Common myeloid progenitor, CD34-positive (primary cell): ENCODE measurements at regions of chr6 and their contacts with region 1.

Region 1: GRCh38 chr6:75208298-75209183 is 2.7 kb upstream of the COL12A1 start:
- DNase-seq: peak; percentile 79 to 88 (median 86)
- H3K4me3 ChIP-seq: peak overlapping the region in 6 of 7 experiments; percentile 24 to 60 (median 26)
- H3K27ac ChIP-seq: no peak overlapping the region
- H3K4me1 ChIP-seq: peaks cover 3 to 60% (median 45%) of the 10 kb centered on the region in 4 experiments
- H3K27me3 ChIP-seq: peaks cover 4 to 53% (median 46%) of the 10 kb centered on the region in 5 experiments

Region 2: DNA sequence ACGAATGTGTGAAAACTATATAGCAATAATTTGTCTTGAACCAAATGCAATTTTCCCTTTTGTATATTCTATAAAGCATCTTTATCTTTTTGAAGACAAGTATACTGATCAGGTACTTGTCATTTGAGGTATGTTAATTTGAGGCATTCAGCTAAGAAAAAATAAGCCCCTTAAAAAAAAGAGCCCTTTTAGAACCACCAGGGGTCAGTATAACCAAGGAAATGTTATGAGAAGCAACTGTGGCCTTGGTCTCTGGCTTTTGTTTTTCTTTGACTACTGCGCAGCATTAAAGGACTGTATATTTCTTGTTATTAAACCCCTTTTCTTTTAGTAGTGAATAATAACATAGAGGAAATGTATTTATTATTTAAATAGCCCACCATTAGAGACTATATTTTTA is 1469.4 kb before region 1 on chr6:
- CTCF ChIA-PET with region 1: interaction called, 11 read pairs
- POLR2A ChIA-PET with region 1: no interaction called
- DNase-seq: peak; percentile 71 to 86 (median 77)
- H3K4me3 ChIP-seq: no peak overlapping the region
- H3K27ac ChIP-seq: no peak overlapping the region
- H3K4me1 ChIP-seq: peaks cover 0 to 5% (median 0%) of the 10 kb centered on the region in 4 experiments
- H3K27me3 ChIP-seq: no peaks in the 10 kb centered on the region

Region 3: DNA sequence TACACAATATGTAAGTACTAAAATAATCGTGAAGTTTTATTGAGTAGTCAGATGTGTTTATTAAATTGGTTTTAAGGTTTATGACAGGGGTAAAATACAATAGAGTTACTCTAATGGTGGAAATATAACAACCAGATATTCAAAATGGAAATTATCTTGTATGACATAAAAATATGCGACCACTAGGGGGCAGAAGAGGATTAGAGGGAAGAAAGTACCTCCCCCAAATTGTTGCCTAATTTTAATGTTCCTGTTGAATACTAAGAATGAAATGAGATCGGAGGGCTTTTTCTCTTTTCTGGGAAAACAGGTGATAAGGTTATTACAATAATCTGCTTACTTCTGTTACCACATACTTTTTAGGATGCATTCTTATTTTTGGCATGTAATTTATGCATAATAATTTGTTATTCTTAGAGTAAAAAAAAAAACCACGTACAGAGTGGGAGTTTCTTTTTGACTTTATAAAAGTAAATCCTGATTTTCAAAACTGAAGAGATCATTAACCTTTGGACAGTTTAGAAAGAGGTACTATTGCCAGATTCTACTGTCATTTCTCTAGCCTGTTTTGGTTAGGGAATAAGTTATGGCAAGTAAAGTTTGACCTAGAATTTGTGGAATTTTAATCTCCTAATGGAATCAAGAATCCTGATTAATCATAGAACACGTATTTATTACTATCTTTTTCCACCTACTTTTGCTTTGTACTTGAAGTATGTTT is 1353.4 kb before region 1 on chr6:
- CTCF ChIA-PET with region 1: interaction called, 23 read pairs
- POLR2A ChIA-PET with region 1: no interaction called
- DNase-seq: peak; percentile 67 to 84 (median 80)
- H3K4me3 ChIP-seq: no peak overlapping the region
- H3K27ac ChIP-seq: no peak overlapping the region
- H3K4me1 ChIP-seq: no peaks in the 10 kb centered on the region
- H3K27me3 ChIP-seq: no peaks in the 10 kb centered on the region

Region 4: GRCh38 chr6:73969971-73970970 is 1238.3 kb before region 1 on chr6:
- CTCF ChIA-PET with region 1: interaction called, 16 read pairs
- POLR2A ChIA-PET with region 1: no interaction called
- DNase-seq: peak; percentile 16 to 53 (median 49)
- H3K4me3 ChIP-seq: no peak overlapping the region
- H3K27ac ChIP-seq: no peak overlapping the region
- H3K4me1 ChIP-seq: peaks cover 0 to 4% (median 0%) of the 10 kb centered on the region in 4 experiments
- H3K27me3 ChIP-seq: no peaks in the 10 kb centered on the region

Region 5: GRCh38 chr6:74091136-74091793 is 1117.3 kb before region 1 on chr6:
- CTCF ChIA-PET with region 1: interaction called, 63 read pairs
- POLR2A ChIA-PET with region 1: no interaction called
- DNase-seq: peak; percentile 20 to 54 (median 41)
- H3K4me3 ChIP-seq: no peak overlapping the region
- H3K27ac ChIP-seq: no peak overlapping the region
- H3K4me1 ChIP-seq: no peaks in the 10 kb centered on the region
- H3K27me3 ChIP-seq: peaks cover 0 to 2% (median 0%) of the 10 kb centered on the region in 5 experiments

Region 6: GRCh38 chr6:74899416-74899815 is 309.1 kb before region 1 on chr6:
- CTCF ChIA-PET with region 1: no interaction called
- POLR2A ChIA-PET with region 1: no interaction called
- DNase-seq: no peak
- H3K4me3 ChIP-seq: no peak overlapping the region
- H3K27ac ChIP-seq: no peak overlapping the region
- H3K4me1 ChIP-seq: no peaks in the 10 kb centered on the region
- H3K27me3 ChIP-seq: no peaks in the 10 kb centered on the region

Region 7: DNA sequence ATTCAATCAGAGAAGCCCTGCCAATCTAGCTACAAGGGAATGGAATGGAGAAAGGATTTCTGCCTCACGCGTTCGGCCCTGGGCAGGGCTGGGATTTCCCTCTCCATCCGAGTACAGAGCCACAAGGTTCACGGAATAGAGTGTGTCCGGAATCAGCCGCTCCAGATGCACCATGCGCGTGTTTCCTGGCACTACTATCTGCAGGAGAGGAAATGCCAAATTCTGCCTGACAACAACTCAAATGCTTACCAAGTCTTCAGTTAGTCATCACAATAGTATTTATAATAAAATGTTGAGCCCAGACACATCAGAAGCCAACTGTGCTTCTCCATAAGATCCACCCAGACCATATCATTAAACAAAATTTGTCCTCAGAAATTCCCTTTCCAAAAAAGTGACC is 77.8 kb before region 1 on chr6:
- CTCF ChIA-PET with region 1: no interaction called
- POLR2A ChIA-PET with region 1: no interaction called
- DNase-seq: no peak
- H3K4me3 ChIP-seq: no peak overlapping the region
- H3K27ac ChIP-seq: no peak overlapping the region
- H3K4me1 ChIP-seq: no peaks in the 10 kb centered on the region
- H3K27me3 ChIP-seq: no peaks in the 10 kb centered on the region

Region 8: GRCh38 chr6:75220357-75220756 is 11.8 kb after region 1 on chr6:
- CTCF ChIA-PET with region 1: interaction called, 15 read pairs
- POLR2A ChIA-PET with region 1: no interaction called
- DNase-seq: no peak
- H3K4me3 ChIP-seq: no peak overlapping the region
- H3K27ac ChIP-seq: no peak overlapping the region
- H3K4me1 ChIP-seq: no peaks in the 10 kb centered on the region
- H3K27me3 ChIP-seq: peaks cover 0 to 4% (median 0%) of the 10 kb centered on the region in 5 experiments